ENCODE measurements at regions of chr17 and their contacts with region 1.

Region 1: GRCh38 chr17:65100316-65101140 is 36.6 kb upstream of the RGS9 start:
- DNase-seq: peak; percentile 70
- ATAC-seq: peak; percentile 90
- H3K4me3 ChIP-seq: peak overlapping the region; percentile 54 to 65
- H3K27ac ChIP-seq: peak overlapping the region; percentile 69
- H3K4me1 ChIP-seq: peaks cover 16 to 25% of the 10 kb centered on the region in 2 experiments
- H3K27me3 ChIP-seq: no peaks in the 10 kb centered on the region
- CTCF ChIP-seq: peak; percentile 84 to 98 (median 97)
- POLR2A ChIP-seq: no peak
- RAD21 ChIP-seq: peak; percentile 85

Region 2: GRCh38 chr17:64938925-64939474 is 161.5 kb before region 1 on chr17:
- CTCF ChIA-PET with region 1: no interaction called
- POLR2A ChIA-PET with region 1: no interaction called
- RAD21 ChIA-PET with region 1: no interaction called
- intact Hi-C with region 1: no loop called
- DNase-seq: no peak
- ATAC-seq: peak; percentile 82
- H3K4me3 ChIP-seq: no peak overlapping the region
- H3K27ac ChIP-seq: no peak overlapping the region
- H3K4me1 ChIP-seq: peaks cover 0 to 12% of the 10 kb centered on the region in 2 experiments; a peak in 2 of 4 replicates
- H3K27me3 ChIP-seq: no peaks in the 10 kb centered on the region
- CTCF ChIP-seq: peak; percentile 59 to 93 (median 78); a peak in 5 of 6 replicates
- POLR2A ChIP-seq: no peak
- RAD21 ChIP-seq: peak; percentile 74

Region 3: GRCh38 chr17:64975329-64976087 is 125.0 kb before region 1 on chr17:
- CTCF ChIA-PET with region 1: interaction called, 11 read pairs
- POLR2A ChIA-PET with region 1: interaction called, 7 read pairs
- RAD21 ChIA-PET with region 1: no interaction called
- intact Hi-C with region 1: loop called (anchors 5 kb)
- DNase-seq: peak; percentile 95
- ATAC-seq: peak; percentile 93
- H3K4me3 ChIP-seq: peak overlapping the region; percentile 61 to 83
- H3K27ac ChIP-seq: peak overlapping the region; percentile 97
- H3K4me1 ChIP-seq: peaks cover 30 to 49% of the 10 kb centered on the region in 2 experiments
- H3K27me3 ChIP-seq: no peaks in the 10 kb centered on the region
- CTCF ChIP-seq: no peak
- POLR2A ChIP-seq: peak; percentile 96
- RAD21 ChIP-seq: no peak

Region 4: GRCh38 chr17:65074778-65075250 is 25.7 kb before region 1 on chr17:
- CTCF ChIA-PET with region 1: interaction called, 27 read pairs
- POLR2A ChIA-PET with region 1: interaction called, 3 read pairs
- RAD21 ChIA-PET with region 1: interaction called, 3 to 6 read pairs
- intact Hi-C with region 1: no loop called
- DNase-seq: no peak
- ATAC-seq: no peak
- H3K4me3 ChIP-seq: no peak overlapping the region
- H3K27ac ChIP-seq: no peak overlapping the region
- H3K4me1 ChIP-seq: peaks cover 7 to 25% of the 10 kb centered on the region in 2 experiments; a peak in 3 of 4 replicates
- H3K27me3 ChIP-seq: no peaks in the 10 kb centered on the region
- CTCF ChIP-seq: no peak
- POLR2A ChIP-seq: no peak
- RAD21 ChIP-seq: no peak

Region 5: GRCh38 chr17:65117384-65118035 is 17.0 kb after region 1 on chr17:
- CTCF ChIA-PET with region 1: interaction called, 12 read pairs
- POLR2A ChIA-PET with region 1: interaction called, 8 read pairs
- RAD21 ChIA-PET with region 1: no interaction called
- intact Hi-C with region 1: no loop called
- DNase-seq: no peak
- ATAC-seq: no peak
- H3K4me3 ChIP-seq: no peak overlapping the region
- H3K27ac ChIP-seq: no peak overlapping the region
- H3K4me1 ChIP-seq: peaks cover 0 to 7% of the 10 kb centered on the region in 2 experiments; a peak in 2 of 4 replicates
- H3K27me3 ChIP-seq: 0 out of 2 replicates have a peak, but pooled peaks cover 3% of the 10 kb centered on the region
- CTCF ChIP-seq: no peak
- POLR2A ChIP-seq: no peak
- RAD21 ChIP-seq: no peak